Thyroid gland (tissue), 4 donors: ENCODE measurements at regions of chr5 and their contacts with region 1.

Region 1: DNA sequence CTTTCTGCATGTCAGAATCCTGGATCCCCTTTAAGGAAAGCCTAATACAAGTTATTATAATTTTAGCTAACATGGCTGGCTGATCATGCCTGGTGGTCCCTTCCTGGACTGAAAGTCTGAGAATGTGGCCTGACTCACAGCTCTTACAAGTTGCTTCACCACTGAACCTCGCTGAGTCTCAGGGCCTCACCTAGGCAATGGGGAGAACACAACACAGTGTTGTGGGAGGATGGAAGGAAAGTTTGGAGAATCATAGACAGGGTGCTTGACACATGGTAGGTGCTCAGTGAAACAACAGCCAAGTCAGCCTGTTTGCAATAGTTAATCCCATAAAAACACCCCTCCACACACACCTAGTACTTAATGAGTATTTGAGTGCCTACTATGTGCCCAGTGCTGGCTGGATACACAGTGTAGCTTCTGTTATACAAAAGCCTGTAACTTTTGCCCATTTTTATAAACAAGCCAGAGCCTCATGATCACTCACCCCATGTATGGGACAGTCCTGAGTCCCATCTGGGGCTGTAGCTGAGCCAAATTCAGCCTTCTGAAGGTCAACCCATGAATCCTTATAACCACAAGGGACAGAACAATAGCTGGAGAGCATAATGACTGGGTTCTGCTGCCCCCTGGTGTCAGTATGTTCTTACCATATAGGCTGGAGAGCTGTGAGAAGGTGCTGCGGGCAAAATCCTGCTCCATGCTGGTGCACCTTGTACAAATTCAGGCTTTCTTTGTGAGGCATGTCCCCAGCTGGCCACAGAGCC is 3.9 kb downstream of the ACSL6 start:
- DNase-seq: peak; percentile 79 to 81
- H3K4me3 ChIP-seq: no peak overlapping the region
- H3K27ac ChIP-seq: no peak overlapping the region
- H3K4me1 ChIP-seq: peaks cover 9 to 11% of the 10 kb centered on the region in 2 donors
- H3K27me3 ChIP-seq: no peaks in the 10 kb centered on the region
- CTCF ChIP-seq: peak in 5 of 6 experiments; percentile 32 to 79 (median 71)
- POLR2A ChIP-seq: no peak

Region 2: GRCh38 chr5:131589510-131590348 is 417.9 kb before region 1 on chr5:
- intact Hi-C with region 1: loop called (anchors 5 kb)
- DNase-seq: no peak
- H3K4me3 ChIP-seq: no peak overlapping the region
- H3K27ac ChIP-seq: no peak overlapping the region
- H3K4me1 ChIP-seq: peaks cover 0 to 7% of the 10 kb centered on the region in 2 donors
- H3K27me3 ChIP-seq: no peaks in the 10 kb centered on the region
- CTCF ChIP-seq: peak; percentile 51 to 88 (median 80)
- POLR2A ChIP-seq: no peak

Region 3: DNA sequence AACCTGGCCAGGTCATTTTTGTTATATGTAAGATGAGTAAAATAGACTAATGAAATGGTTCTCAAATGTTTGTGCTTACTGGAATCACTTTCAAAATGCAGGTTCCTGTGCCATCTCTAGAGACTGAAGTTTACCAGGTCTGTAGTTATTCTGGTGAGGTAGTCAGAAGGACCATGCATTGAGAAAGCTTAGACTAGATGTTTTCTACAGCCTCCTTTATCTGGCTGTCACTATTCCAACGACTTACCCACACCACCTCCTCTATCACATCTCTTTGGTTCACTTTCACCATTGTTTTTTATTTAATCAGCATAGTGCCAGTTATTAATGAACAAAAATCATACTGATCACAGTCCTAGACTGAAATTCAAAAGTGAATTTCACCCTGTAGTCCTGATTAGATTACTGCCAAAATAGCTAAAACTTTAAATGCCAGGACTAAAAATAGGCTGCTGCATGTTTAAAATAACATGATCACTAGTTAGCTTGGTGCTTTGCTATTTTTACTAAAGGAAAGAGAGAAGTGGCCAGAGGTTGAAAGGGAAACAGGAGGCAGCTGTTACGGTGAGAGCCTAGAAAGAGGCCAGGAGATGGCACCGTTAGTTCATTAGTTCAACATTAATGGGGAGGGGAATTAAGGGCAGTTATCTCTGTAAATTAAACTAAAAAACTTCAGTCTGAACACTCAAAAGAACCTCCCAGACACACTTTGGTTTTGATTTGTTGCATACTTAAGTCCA is 196.9 kb before region 1 on chr5:
- intact Hi-C with region 1: loop called (anchors 10 kb)
- DNase-seq: peak in 1 of 2 donors; percentile 7
- H3K4me3 ChIP-seq: no peak overlapping the region
- H3K27ac ChIP-seq: peak overlapping the region in 1 of 3 donors; percentile 41
- H3K4me1 ChIP-seq: peaks cover 0 to 4% of the 10 kb centered on the region in 2 donors
- H3K27me3 ChIP-seq: no peaks in the 10 kb centered on the region
- CTCF ChIP-seq: peak in 2 of 6 experiments; percentile 25 to 36
- POLR2A ChIP-seq: no peak